ENCODE measurements at regions of chr4 and their contacts with region 1.

Region 1: GRCh38 chr4:77095101-77095821 is 19.5 kb upstream of the CCNI start:
- DNase-seq: peak; percentile 53
- H3K4me3 ChIP-seq: no peak overlapping the region
- H3K27ac ChIP-seq: peak overlapping the region; percentile 26
- H3K4me1 ChIP-seq: peaks cover 43% of the 10 kb centered on the region
- H3K27me3 ChIP-seq: no peaks in the 10 kb centered on the region
- CTCF ChIP-seq: peak; percentile 94

Region 2: DNA sequence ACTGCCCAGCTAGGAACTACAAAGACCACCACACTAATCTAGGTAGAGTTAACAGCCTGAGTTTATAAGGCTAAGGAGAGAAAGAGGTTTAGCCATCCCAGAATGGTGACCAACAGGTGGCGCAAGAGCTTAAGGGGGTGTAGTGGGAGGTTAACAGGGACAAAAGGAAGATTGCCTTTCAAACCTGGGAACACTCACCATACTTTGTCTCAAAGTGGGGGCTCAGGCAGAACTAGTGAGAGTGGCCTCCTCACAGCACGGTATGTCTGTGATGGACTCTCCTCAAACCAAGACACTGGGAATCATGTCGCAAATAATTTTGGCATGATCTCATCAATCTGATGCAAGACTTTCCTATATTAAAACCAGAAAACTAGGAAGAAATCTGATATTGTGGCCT is 42.9 kb before region 1 on chr4:
- CTCF ChIA-PET with region 1: no interaction called
- dilution Hi-C with region 1: no loop called
- in situ Hi-C with region 1: no loop called
- intact Hi-C with region 1: loop called (anchors 2 kb)
- DNase-seq: peak; percentile 46
- H3K4me3 ChIP-seq: no peak overlapping the region
- H3K27ac ChIP-seq: peak overlapping the region; percentile 51
- H3K4me1 ChIP-seq: peaks cover 31% of the 10 kb centered on the region
- H3K27me3 ChIP-seq: no peaks in the 10 kb centered on the region
- CTCF ChIP-seq: peak; percentile 71 to 80

Measured in mammary epithelial cell (primary cell).